BJ (cell line): ENCODE measurements at regions of chr4 and their contacts with region 1.

Region 1: GRCh38 chr4:112214390-112215264 is 17.0 kb upstream of the AP1AR start:
- DNase-seq: no peak
- H3K4me3 ChIP-seq: no peak overlapping the region
- H3K27me3 ChIP-seq: no peaks in the 10 kb centered on the region
- CTCF ChIP-seq: peak; percentile 32

Region 2: GRCh38 chr4:112231779-112232713 is 17.4 kb after region 1 on chr4 and contains the start of gene AP1AR:
- CTCF ChIA-PET with region 1: interaction called, 11 read pairs
- POLR2A ChIA-PET with region 1: no interaction called
- DNase-seq: peak; percentile 9
- H3K4me3 ChIP-seq: peak within 1 kb of the TSS; percentile 99
- H3K27me3 ChIP-seq: no peaks in the 10 kb centered on the region
- CTCF ChIP-seq: peak; percentile 55
- polyA plus RNA-seq, gene AP1AR: 3.3 and 8.3 TPM in 2 replicates